ENCODE measurements at regions of chr13 and their contacts with region 1.

Region 1: DNA sequence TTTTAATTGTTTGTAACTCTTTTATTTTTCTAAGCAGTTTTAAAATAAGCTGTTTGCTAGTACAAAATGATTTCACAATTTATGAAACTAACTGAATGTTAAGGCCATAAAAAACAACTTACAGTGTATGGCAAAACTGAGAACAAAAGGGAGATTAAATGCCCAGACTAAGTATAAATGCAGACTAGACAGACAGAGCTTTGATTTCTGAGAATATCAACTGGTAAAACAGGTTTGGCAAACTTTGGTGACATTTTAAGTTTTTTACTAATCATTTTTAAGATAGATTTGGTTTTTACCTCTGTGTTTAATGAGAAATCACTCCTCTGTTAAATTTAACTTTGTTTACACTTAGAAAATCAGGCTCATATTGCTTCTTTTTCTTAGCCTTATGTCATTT is 127.5 kb upstream of the KLF5 start:
- DNase-seq: no peak
- H3K4me3 ChIP-seq: no peak overlapping the region
- H3K27me3 ChIP-seq: no peaks in the 10 kb centered on the region
- CTCF ChIP-seq: no peak

Region 2: DNA sequence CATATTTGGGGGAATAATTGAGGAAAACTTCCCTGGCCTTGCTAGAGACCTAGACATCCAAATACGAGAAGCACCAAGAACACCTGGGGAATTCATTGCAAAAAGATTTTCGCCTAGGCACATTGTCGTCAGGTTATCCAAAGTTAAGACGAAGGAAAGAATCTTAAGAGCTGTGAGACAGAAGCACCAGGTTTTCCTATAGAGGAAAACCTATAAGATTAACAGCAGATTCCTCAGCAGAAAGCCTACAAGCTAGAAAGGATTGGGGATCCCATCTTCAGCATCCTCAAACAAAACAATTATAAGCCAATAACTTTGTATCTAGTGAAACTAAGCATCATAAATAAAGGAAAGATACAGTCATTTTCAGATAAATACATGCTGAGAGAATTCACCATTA is 34.4 kb before region 1 on chr13:
- CTCF ChIA-PET with region 1: no interaction called
- POLR2A ChIA-PET with region 1: interaction called, 13 read pairs
- DNase-seq: no peak
- H3K4me3 ChIP-seq: no peak overlapping the region
- H3K27me3 ChIP-seq: no peaks in the 10 kb centered on the region
- CTCF ChIP-seq: no peak

Region 3: DNA sequence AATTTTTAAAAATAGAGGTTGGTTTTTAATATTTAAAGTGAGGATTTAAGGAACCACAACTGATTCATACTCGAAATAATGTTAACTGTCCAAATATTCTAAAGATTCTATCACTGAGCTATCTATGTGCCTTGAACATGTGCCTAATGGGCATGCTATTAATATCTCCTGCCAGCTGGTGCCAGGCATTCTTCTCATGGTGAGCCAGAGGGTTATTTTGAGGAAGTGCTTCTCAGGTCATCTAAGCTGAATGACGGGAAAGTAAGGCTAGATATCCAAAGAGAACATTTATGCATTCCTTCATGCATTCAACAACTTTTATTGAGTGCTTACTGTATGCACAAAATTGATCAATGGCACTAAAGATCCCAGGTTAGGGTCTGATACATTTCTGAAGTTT is 11.2 kb before region 1 on chr13:
- CTCF ChIA-PET with region 1: no interaction called
- POLR2A ChIA-PET with region 1: no interaction called
- DNase-seq: no peak
- H3K4me3 ChIP-seq: no peak overlapping the region
- H3K27me3 ChIP-seq: no peaks in the 10 kb centered on the region
- CTCF ChIP-seq: no peak

Region 4: GRCh38 chr13:72952529-72953181 is 21.3 kb after region 1 on chr13:
- CTCF ChIA-PET with region 1: no interaction called
- POLR2A ChIA-PET with region 1: no interaction called
- DNase-seq: no peak
- H3K4me3 ChIP-seq: no peak overlapping the region
- H3K27me3 ChIP-seq: no peaks in the 10 kb centered on the region
- CTCF ChIP-seq: no peak